ENCODE measurements at regions of chr6 and their contacts with region 1.

Region 1: DNA sequence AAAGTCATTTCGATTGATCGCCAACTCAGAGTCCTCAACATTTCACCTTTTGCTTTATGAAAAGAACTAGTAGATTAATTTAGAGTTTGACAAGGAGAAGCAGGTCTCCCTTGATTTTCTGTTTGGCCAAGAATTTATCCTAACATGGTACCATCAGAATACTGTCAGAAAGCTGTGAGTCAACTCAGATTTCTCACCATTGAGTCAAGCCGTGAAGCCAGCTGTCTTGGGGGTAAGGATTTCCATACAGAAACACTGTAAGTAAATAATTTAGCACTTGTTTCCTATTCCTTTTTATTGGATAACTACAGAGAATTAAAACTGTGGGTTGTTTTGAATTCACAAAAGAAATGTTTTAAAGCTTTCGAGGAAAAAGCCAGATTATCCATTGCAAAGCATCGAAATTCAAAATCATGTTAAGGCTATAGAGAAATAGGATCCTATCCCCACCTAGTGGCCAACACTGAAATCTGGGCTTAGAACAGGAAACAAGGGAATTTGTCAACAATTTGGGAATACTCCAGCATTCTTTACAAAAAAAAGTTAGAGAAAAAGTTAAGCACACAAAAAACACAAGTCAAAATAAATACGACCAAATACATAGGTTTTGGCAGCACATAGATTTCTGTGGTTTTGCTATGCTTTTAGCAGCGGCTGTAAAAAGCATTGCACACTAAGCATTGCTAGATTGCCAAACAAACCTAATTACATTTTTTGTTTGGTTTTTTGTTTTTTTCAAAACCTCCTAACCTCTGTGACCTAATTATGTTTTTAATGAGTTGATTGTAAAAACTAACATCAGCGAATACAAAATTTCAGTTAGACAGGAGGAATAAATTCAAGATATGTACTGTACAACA is 44.2 kb downstream of the COL11A2 start:
- DNase-seq: peak; percentile 63
- ATAC-seq: no peak; the same call in 1 of the 2 replicates
- H3K4me3 ChIP-seq: no peak overlapping the region
- H3K27ac ChIP-seq: no peak overlapping the region
- H3K4me1 ChIP-seq: no peaks in the 10 kb centered on the region
- H3K27me3 ChIP-seq: peaks cover 21% of the 10 kb centered on the region
- CTCF ChIP-seq: peak; percentile 81

Region 2: GRCh38 chr6:33082702-33083101 is 65.3 kb before region 1 on chr6:
- CTCF ChIA-PET with region 1: no interaction called
- POLR2A ChIA-PET with region 1: no interaction called
- intact Hi-C with region 1: no loop called
- DNase-seq: peak; percentile 12
- ATAC-seq: no peak
- H3K4me3 ChIP-seq: no peak overlapping the region
- H3K27ac ChIP-seq: no peak overlapping the region
- H3K4me1 ChIP-seq: no peaks in the 10 kb centered on the region
- H3K27me3 ChIP-seq: peaks cover 52% of the 10 kb centered on the region
- CTCF ChIP-seq: peak; percentile 45

Region 3: DNA sequence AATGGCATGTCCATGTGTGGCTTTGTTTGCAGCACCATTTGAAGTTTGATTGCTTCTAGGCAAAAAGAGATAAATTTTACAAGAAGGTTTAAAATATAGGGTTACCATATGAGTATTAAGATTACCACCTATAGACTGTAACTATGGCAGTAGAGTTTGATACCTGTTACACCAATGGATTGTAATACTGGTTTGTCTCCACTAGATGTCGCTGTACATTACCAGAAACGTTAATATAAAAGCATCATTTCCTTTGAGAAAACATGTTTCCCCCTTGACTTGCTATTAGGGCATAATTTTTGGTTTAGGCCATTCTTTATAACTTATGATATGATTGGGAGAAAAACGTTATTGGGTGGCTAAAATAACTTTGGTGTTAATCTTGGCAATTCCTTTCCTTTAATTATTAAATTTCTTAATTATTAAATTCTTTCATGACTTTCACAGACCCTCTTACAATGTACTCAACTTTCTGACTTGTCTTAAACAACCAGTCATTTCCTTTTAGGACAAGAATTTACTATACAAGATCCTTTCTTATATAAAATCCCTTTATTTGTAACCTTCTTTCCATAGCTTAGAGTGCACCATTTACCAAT is 29.4 kb before region 1 on chr6:
- CTCF ChIA-PET with region 1: interaction called, 3 read pairs
- POLR2A ChIA-PET with region 1: no interaction called
- intact Hi-C with region 1: loop called (anchors 1 kb)
- DNase-seq: peak; percentile 77
- ATAC-seq: no peak
- H3K4me3 ChIP-seq: no peak overlapping the region
- H3K27ac ChIP-seq: no peak overlapping the region
- H3K4me1 ChIP-seq: no peaks in the 10 kb centered on the region
- H3K27me3 ChIP-seq: peaks cover 60% of the 10 kb centered on the region
- CTCF ChIP-seq: peak; percentile 77

Region 4: DNA sequence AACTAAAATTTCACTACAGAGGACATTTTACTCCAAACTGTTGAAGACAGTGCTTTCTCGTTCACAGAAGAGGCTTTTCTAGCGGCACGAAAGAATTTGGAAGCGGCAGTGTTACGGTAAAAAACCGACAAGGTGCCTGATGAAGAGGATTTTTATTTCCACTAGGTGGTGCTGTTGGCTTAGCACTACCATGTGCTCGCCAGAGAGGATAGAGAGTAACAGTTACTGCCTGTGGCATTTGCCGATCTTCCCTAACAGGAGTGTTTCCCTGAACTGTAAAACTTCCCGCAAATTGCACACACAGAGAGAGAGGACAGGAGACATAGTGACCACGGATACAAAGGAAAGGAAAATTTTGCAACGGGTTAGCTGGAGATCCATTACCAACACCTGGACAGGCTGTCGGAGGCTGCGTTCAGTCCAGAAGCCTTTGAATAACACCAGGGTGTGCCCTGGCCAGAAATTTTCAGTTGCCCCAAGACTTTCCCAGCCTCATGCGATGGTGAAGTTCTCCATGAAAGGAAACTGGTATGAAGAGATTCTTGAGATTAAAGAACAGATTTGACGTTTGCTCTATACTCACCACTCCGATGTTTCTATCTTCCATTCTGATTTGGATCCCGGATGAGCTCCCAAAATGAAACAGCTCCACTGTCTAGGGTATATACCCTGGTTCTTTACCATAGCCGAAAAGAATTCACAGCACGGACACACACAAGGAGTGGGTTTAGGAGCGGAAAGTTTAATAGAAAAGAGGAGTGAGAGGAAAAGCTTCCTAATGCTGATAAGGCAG is 24.1 kb before region 1 on chr6:
- CTCF ChIA-PET with region 1: interaction called, 4 read pairs
- POLR2A ChIA-PET with region 1: no interaction called
- intact Hi-C with region 1: loop called (anchors 1 kb)
- DNase-seq: peak; percentile 84
- ATAC-seq: peak; percentile 51; the same call in 1 of the 2 replicates
- H3K4me3 ChIP-seq: no peak overlapping the region
- H3K27ac ChIP-seq: no peak overlapping the region
- H3K4me1 ChIP-seq: no peaks in the 10 kb centered on the region
- H3K27me3 ChIP-seq: peaks cover 37% of the 10 kb centered on the region
- CTCF ChIP-seq: peak; percentile 82